CD4-positive, alpha-beta T cell (primary cell): ENCODE measurements at regions of chr9 and their contacts with region 1.

Region 1: DNA sequence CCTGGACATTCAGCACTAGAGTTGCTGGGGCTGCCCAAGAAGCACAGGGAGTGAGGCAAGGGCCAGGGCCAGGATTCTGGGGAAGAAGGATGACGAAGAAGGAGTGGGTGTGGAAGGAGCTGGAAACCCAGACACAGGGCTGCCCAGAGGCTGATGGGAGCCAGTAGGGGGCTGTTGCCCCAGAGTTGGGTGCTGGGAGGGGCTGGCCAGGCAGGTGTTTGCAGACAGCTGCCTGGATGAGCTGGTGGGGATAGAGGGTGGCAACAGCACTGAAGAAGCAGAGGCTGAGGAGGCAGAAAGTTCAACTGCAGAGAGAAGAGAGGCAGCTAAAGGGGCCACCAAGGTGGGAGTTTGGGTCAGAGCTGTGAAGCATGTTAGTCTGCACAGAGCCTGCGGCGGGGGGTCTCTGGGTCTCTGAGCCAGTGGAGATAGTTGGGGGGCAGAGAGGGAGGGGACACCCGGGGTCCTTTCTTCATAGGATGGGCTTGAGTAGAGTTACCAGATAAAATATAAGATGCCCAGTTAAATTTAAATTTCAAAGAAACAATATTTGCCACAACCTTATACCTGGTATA is 2.5 kb upstream of the AQP7 start:
- DNase-seq: peak in 1 of 14 experiments; percentile 11
- ATAC-seq: no peak
- H3K4me3 ChIP-seq: no peak overlapping the region
- H3K4me3 Mint-ChIP-seq: no peak overlapping the region
- H3K27ac ChIP-seq: no peak overlapping the region
- H3K27ac Mint-ChIP-seq: peak overlapping the region; percentile 45
- H3K4me1 ChIP-seq: peaks cover 14% of the 10 kb centered on the region
- H3K4me1 Mint-ChIP-seq: peaks cover 6% of the 10 kb centered on the region
- H3K27me3 ChIP-seq: no peaks in the 10 kb centered on the region
- H3K27me3 Mint-ChIP-seq: no peaks in the 10 kb centered on the region
- CTCF ChIP-seq: no peak

Region 2: GRCh38 chr9:33211695-33212393 is 193.0 kb before region 1 on chr9:
- CTCF ChIA-PET with region 1: no interaction called
- POLR2A ChIA-PET with region 1: no interaction called
- intact Hi-C with region 1: no loop called
- DNase-seq: no peak
- ATAC-seq: no peak
- H3K4me3 ChIP-seq: no peak overlapping the region
- H3K4me3 Mint-ChIP-seq: no peak overlapping the region
- H3K27ac ChIP-seq: no peak overlapping the region
- H3K27ac Mint-ChIP-seq: no peak overlapping the region
- H3K4me1 ChIP-seq: no peaks in the 10 kb centered on the region
- H3K4me1 Mint-ChIP-seq: no peaks in the 10 kb centered on the region
- H3K27me3 ChIP-seq: no peaks in the 10 kb centered on the region
- H3K27me3 Mint-ChIP-seq: no peaks in the 10 kb centered on the region
- CTCF ChIP-seq: no peak

Region 3: DNA sequence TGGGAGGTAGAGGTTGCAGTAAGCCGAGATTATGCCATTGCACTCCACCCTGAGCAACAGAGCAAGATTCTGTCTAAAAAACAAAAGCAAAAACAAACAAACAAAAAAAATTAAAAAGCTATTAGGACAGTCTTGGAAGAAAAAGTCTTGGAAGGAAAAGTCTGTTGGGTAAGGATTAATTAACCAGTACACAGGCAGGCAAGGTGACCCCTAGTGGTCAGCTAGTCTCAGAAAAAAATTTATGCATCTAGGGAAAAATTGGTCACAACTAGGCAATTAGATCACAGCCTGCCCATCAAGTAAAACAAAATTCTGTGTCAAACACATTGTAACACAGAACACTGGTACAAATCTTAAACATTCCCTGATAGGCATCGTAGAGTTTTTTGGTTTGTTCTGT is 112.5 kb after region 1 on chr9:
- CTCF ChIA-PET with region 1: interaction called, 4 read pairs
- POLR2A ChIA-PET with region 1: no interaction called
- intact Hi-C with region 1: loop called in 1 of 2 experiments (anchors 5 kb)
- DNase-seq: peak in 4 of 14 experiments; percentile 14 to 38 (median 32)
- ATAC-seq: no peak
- H3K4me3 ChIP-seq: no peak overlapping the region
- H3K4me3 Mint-ChIP-seq: no peak overlapping the region
- H3K27ac ChIP-seq: no peak overlapping the region
- H3K27ac Mint-ChIP-seq: no peak overlapping the region
- H3K4me1 ChIP-seq: no peaks in the 10 kb centered on the region
- H3K4me1 Mint-ChIP-seq: no peaks in the 10 kb centered on the region
- H3K27me3 ChIP-seq: peaks cover 0 to 7% of the 10 kb centered on the region in 2 experiments
- H3K27me3 Mint-ChIP-seq: peaks cover 27% of the 10 kb centered on the region
- CTCF ChIP-seq: peak; percentile 74